Left ventricle myocardium inferior (tissue), 1 donor: ENCODE measurements at regions of chr3 and their contacts with region 1.

Region 1: DNA sequence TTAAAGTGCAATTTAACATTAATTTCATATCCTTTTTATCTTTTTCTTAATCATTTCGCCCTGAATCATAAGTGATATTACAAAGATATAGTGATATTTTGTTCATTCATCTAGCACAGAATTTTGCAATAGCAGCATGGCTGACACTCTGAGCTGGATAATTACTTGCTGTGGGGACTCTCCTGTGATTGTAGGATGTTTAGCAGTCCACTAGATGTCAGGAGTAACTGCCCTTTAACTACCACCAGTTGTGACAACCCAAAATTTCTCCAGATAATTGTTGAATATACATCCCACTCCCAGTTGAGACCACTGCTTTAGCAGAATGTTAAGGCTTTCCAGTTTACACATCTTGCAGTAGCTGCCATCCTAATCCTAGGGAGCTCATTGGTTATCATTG is 196.8 kb upstream of the MBNL1 start:
- DNase-seq: no peak
- H3K4me3 ChIP-seq: no peak overlapping the region
- H3K27ac ChIP-seq: no peak overlapping the region
- H3K4me1 ChIP-seq: no peaks in the 10 kb centered on the region
- H3K27me3 ChIP-seq: no peaks in the 10 kb centered on the region
- CTCF ChIP-seq: peak; percentile 61

Region 2: GRCh38 chr3:152466784-152467183 is 394.9 kb after region 1 on chr3:
- intact Hi-C with region 1: loop called (anchors 10 kb)
- DNase-seq: no peak
- H3K4me3 ChIP-seq: no peak overlapping the region
- H3K27ac ChIP-seq: no peak overlapping the region
- H3K4me1 ChIP-seq: peaks cover 32% of the 10 kb centered on the region
- H3K27me3 ChIP-seq: no peaks in the 10 kb centered on the region
- CTCF ChIP-seq: peak; percentile 59